ENCODE measurements at regions of chrX and their contacts with region 1.

Region 1: DNA sequence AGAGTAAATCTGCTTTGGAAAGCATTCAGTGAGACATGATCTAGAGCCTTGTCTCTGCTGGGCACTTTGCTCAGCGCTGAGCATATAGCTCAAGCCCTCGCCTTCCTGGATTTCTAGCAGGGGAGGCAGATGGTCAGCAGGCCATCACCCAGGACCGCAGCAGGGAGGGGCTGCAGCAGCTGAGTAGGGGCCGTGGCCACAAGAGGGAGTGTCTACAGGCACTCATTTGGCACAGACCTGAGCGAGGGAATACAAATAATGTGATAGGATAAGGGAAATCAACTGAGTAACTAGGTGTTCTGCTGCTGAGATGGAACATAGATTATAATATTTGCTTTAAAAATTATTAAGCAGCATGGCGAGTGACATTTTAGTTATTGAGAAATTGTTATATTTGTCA is 30.2 kb downstream of the OFD1 start:
- DNase-seq: no peak
- ATAC-seq: no peak
- H3K4me3 ChIP-seq: no peak overlapping the region
- H3K27ac ChIP-seq: no peak overlapping the region
- H3K4me1 ChIP-seq: peaks cover 14% of the 10 kb centered on the region
- H3K27me3 ChIP-seq: no peaks in the 10 kb centered on the region
- CTCF ChIP-seq: no peak
- EP300 ChIP-seq: no peak
- POLR2A ChIP-seq: no peak
- RAD21 ChIP-seq: no peak

Region 2: GRCh38 chrX:13776387-13776786 is 11.6 kb after region 1 on chrX:
- CTCF ChIA-PET with region 1: interaction called, 5 read pairs
- POLR2A ChIA-PET with region 1: interaction called, 3 read pairs
- RAD21 ChIA-PET with region 1: interaction called, 3 read pairs
- SMC1A ChIA-PET with region 1: interaction called, 10 read pairs
- in situ Hi-C with region 1: no loop called
- intact Hi-C with region 1: no loop called
- DNase-seq: no peak
- ATAC-seq: peak; percentile 34; the same call in 1 of the 3 replicates
- H3K4me3 ChIP-seq: no peak overlapping the region
- H3K27ac ChIP-seq: no peak overlapping the region
- H3K4me1 ChIP-seq: no peaks in the 10 kb centered on the region
- H3K27me3 ChIP-seq: no peaks in the 10 kb centered on the region
- CTCF ChIP-seq: no peak
- EP300 ChIP-seq: no peak
- POLR2A ChIP-seq: no peak
- RAD21 ChIP-seq: no peak

Region 3: GRCh38 chrX:13851996-13852695 is 87.4 kb after region 1 on chrX:
- CTCF ChIA-PET with region 1: interaction called, 3 read pairs
- POLR2A ChIA-PET with region 1: no interaction called
- RAD21 ChIA-PET with region 1: no interaction called
- SMC1A ChIA-PET with region 1: interaction called, 16 read pairs
- in situ Hi-C with region 1: no loop called
- intact Hi-C with region 1: no loop called
- DNase-seq: no peak
- ATAC-seq: peak; percentile 90
- H3K4me3 ChIP-seq: no peak overlapping the region
- H3K27ac ChIP-seq: no peak overlapping the region
- H3K4me1 ChIP-seq: peaks cover 5% of the 10 kb centered on the region; the same call in 1 of the 2 replicates
- H3K27me3 ChIP-seq: no peaks in the 10 kb centered on the region
- CTCF ChIP-seq: peak; percentile 39 to 47 (median 44)
- EP300 ChIP-seq: no peak
- POLR2A ChIP-seq: no peak
- RAD21 ChIP-seq: peak; percentile 27

Measured in GM12878 (cell line).